ENCODE measurements at regions of chr6 and their contacts with region 1.

Region 1: DNA sequence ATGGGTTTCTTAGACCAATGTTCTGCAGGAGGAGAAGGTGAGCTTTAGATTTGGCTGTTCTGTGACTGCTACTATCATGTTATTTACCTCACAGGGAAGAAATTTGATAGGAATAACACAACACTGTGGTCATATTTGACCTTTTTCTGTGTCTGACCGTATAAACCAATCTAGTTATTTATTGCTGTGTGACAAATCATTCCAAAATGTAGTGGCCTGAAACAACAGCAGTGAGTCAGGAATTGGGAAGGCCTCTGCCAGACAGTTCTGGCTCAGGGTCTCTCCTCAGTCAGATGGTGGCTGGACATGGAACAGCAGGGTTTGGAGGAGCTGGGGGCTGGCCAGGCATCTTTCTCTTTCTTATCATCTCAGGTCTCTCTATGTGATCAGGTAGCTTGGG is 33.0 kb downstream of the RIPOR2 start:
- DNase-seq: no peak
- H3K4me3 ChIP-seq: no peak overlapping the region
- H3K4me3 Mint-ChIP-seq: peak overlapping the region in 6 of 7 donors; percentile 10 to 79 (median 52)
- H3K27ac ChIP-seq: no peak overlapping the region
- H3K27ac Mint-ChIP-seq: peak overlapping the region; percentile 60 to 98 (median 89)
- H3K4me1 ChIP-seq: peaks cover 96% of the 10 kb centered on the region
- H3K4me1 Mint-ChIP-seq: peaks cover 93 to 100% (median 98%) of the 10 kb centered on the region in 3 donors
- H3K27me3 ChIP-seq: no peaks in the 10 kb centered on the region
- H3K27me3 Mint-ChIP-seq: no peaks in the 10 kb centered on the region

Region 2: GRCh38 chr6:24949020-24949569 is 46.3 kb after region 1 on chr6:
- CTCF ChIA-PET with region 1: no interaction called
- POLR2A ChIA-PET with region 1: interaction called, 11 read pairs
- DNase-seq: peak in 4 of 5 donors; percentile 21 to 83 (median 80)
- H3K4me3 ChIP-seq: peak overlapping the region; percentile 40
- H3K4me3 Mint-ChIP-seq: peak overlapping the region; percentile 44 to 75 (median 68)
- H3K27ac ChIP-seq: peak overlapping the region; percentile 3
- H3K27ac Mint-ChIP-seq: peak overlapping the region; percentile 78 to 99 (median 91)
- H3K4me1 ChIP-seq: peaks cover 77% of the 10 kb centered on the region
- H3K4me1 Mint-ChIP-seq: peaks cover 77 to 92% (median 92%) of the 10 kb centered on the region in 3 donors
- H3K27me3 ChIP-seq: no peaks in the 10 kb centered on the region
- H3K27me3 Mint-ChIP-seq: no peaks in the 10 kb centered on the region